ENCODE measurements at regions of chr15 and their contacts with region 1.

Region 1: GRCh38 chr15:40743921-40744814 is 10.9 kb downstream of the RMDN3 start:
- DNase-seq: peak; percentile 85
- ATAC-seq: peak; percentile 94
- H3K4me3 Mint-ChIP-seq: peak overlapping the region; percentile 35
- H3K27ac Mint-ChIP-seq: peak overlapping the region; percentile 87
- H3K4me1 Mint-ChIP-seq: peaks cover 45% of the 10 kb centered on the region
- H3K27me3 Mint-ChIP-seq: no peaks in the 10 kb centered on the region

Region 2: GRCh38 chr15:40763801-40764732 is 19.9 kb after region 1 on chr15 and contains the start of gene GCHFR:
- CTCF ChIA-PET with region 1: interaction called, 20 read pairs
- POLR2A ChIA-PET with region 1: interaction called, 13 read pairs
- DNase-seq: peak; percentile 74
- ATAC-seq: peak; percentile 58
- H3K4me3 Mint-ChIP-seq: peak within 1 kb of the TSS; percentile 86
- H3K27ac Mint-ChIP-seq: peak within 1 kb of the TSS; percentile 91
- H3K4me1 Mint-ChIP-seq: peaks cover 45% of the 10 kb centered on the region
- H3K27me3 Mint-ChIP-seq: peaks cover 4% of the 10 kb centered on the region
- total RNA-seq, gene GCHFR: 50.6 to 50.8 TPM

Region 3: GRCh38 chr15:40769274-40770146 is 25.3 kb after region 1 on chr15 and contains the start of gene C15orf62:
- CTCF ChIA-PET with region 1: interaction called, 20 read pairs
- POLR2A ChIA-PET with region 1: interaction called, 13 read pairs
- DNase-seq: peak; percentile 72
- ATAC-seq: peak; percentile 50
- H3K4me3 Mint-ChIP-seq: peak within 1 kb of the TSS; percentile 54
- H3K27ac Mint-ChIP-seq: peak within 1 kb of the TSS; percentile 90
- H3K4me1 Mint-ChIP-seq: peaks cover 43% of the 10 kb centered on the region
- H3K27me3 Mint-ChIP-seq: no peaks in the 10 kb centered on the region
- total RNA-seq, gene C15orf62: 1.1 to 1.2 TPM

Measured in activated CD8-positive, alpha-beta T cell treated with anti-CD3 and anti-CD28 coated beads, Interleukin-2, amount 10 ng/mL, durations not matched to agents 7 days and 5 days (primary cell).